Ascending aorta (tissue), 2 donors: ENCODE measurements at regions of chr7 and their contacts with region 1.

Region 1: GRCh38 chr7:137801003-137801402 is 45.8 kb downstream of the DGKI start:
- DNase-seq: no peak
- H3K4me3 ChIP-seq: no peak overlapping the region
- H3K27ac ChIP-seq: no peak overlapping the region
- H3K4me1 ChIP-seq: no peaks in the 10 kb centered on the region
- H3K27me3 ChIP-seq: no peaks in the 10 kb centered on the region
- CTCF ChIP-seq: no peak

Region 2: DNA sequence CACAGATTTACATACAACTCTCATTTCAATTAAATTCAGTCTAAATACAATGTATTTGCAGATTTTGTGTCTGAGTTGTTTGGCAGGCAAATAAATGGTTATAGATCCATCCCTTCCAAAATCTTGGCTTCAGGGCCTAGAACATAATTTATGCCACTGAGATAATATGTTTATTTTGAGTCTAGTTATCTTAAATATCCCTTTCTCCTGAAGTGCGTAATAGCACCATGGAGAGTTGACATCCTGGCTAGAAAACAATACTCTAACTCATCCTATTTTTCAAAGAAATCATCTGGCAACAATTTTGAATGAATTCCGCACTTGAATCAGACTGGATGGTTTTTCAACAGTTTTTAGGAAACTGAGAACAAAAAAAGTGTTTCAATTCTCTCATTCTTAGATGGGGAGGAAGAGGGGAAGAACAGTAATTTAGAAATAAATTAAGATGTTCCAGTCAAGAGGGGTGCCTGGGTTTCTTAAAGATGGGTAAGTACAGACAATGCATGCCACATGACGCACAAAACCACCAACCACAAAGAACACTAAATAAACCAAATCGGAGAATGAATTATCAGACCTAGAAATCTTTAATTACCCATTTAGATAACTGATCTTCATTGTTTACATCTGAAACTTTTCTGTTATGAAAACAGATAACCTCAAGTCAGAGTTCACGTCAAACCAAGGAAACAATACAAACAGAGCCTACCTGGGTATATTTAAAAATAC is 228.8 kb before region 1 on chr7:
- intact Hi-C with region 1: no loop called
- DNase-seq: no peak
- H3K4me3 ChIP-seq: no peak overlapping the region
- H3K27ac ChIP-seq: no peak overlapping the region
- H3K4me1 ChIP-seq: no peaks in the 10 kb centered on the region
- H3K27me3 ChIP-seq: no peaks in the 10 kb centered on the region
- CTCF ChIP-seq: no peak

Region 3: GRCh38 chr7:137734226-137734625 is 66.8 kb before region 1 on chr7:
- intact Hi-C with region 1: no loop called
- DNase-seq: no peak
- H3K4me3 ChIP-seq: no peak overlapping the region
- H3K27ac ChIP-seq: no peak overlapping the region
- H3K4me1 ChIP-seq: peaks cover 0 to 5% of the 10 kb centered on the region in 2 donors
- H3K27me3 ChIP-seq: no peaks in the 10 kb centered on the region
- CTCF ChIP-seq: no peak

Region 4: GRCh38 chr7:137903382-137904169 is 102.6 kb after region 1 on chr7:
- intact Hi-C with region 1: no loop called
- DNase-seq: peak in 1 of 2 donors; percentile 81
- H3K4me3 ChIP-seq: peak overlapping the region in 1 of 2 donors; percentile 29
- H3K27ac ChIP-seq: peak overlapping the region; percentile 12 to 50
- H3K4me1 ChIP-seq: peaks cover 2 to 29% of the 10 kb centered on the region in 2 donors
- H3K27me3 ChIP-seq: no peaks in the 10 kb centered on the region
- CTCF ChIP-seq: peak; percentile 77 to 81 (median 79)

Region 5: GRCh38 chr7:138144958-138145357 is 344.0 kb after region 1 on chr7:
- intact Hi-C with region 1: no loop called
- DNase-seq: no peak
- H3K4me3 ChIP-seq: no peak overlapping the region
- H3K27ac ChIP-seq: no peak overlapping the region
- H3K4me1 ChIP-seq: no peaks in the 10 kb centered on the region
- H3K27me3 ChIP-seq: no peaks in the 10 kb centered on the region
- CTCF ChIP-seq: no peak

Region 6: GRCh38 chr7:138161600-138162081 is 360.6 kb after region 1 on chr7:
- intact Hi-C with region 1: loop called (anchors 10 kb)
- DNase-seq: peak in 1 of 2 donors; percentile 65
- H3K4me3 ChIP-seq: no peak overlapping the region
- H3K27ac ChIP-seq: no peak overlapping the region
- H3K4me1 ChIP-seq: no peaks in the 10 kb centered on the region
- H3K27me3 ChIP-seq: no peaks in the 10 kb centered on the region
- CTCF ChIP-seq: peak in 1 of 3 experiments; percentile 22